Activated CD4-positive, alpha-beta T cell treated with anti-CD3 and anti-CD28 coated beads, Interleukin-2, amount 10 ng/mL, durations not matched to agents 24 days and 14 days (primary cell): ENCODE measurements at regions of chr2 and their contacts with region 1.

Region 1: DNA sequence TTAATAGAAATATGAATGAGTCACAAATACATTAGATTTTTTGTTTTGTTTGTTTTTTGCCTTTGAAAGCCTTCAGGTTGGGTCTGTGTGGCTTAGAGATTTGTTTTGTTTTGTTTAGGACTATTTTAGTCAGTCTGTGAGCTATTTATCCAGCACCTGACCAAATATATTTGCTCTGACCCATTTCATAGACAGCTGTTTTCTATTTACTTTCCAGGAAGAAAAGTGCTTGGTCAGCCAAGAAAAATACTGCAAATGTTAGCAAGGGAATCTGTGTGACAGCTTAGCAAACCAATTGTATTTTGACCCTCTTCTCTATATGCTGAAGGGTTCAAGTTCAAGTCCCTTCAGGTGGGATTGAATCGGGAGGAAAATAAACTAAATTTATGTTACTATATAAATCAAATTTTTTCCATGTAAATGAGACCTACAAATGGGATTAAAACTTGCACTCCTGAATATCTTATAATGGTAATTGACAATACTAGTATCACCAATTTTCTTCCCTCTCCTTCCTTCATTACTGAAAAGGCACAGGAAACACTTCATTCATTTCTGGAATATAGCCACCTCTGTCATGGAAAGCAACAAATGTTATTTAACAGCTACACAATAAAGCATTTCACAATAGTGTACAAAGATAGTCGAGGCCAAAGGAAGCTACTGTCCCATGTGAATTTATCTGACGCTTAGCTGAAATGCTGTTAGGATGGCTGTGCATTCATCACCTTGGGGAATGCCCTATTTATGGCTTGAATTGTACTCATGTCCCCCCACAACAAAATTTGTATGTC is 23.1 kb upstream of the KLF7 start:
- DNase-seq: no peak
- H3K4me3 Mint-ChIP-seq: no peak overlapping the region
- H3K27ac Mint-ChIP-seq: no peak overlapping the region
- H3K4me1 Mint-ChIP-seq: peaks cover 7% of the 10 kb centered on the region
- H3K27me3 Mint-ChIP-seq: peaks cover 12% of the 10 kb centered on the region

Region 2: DNA sequence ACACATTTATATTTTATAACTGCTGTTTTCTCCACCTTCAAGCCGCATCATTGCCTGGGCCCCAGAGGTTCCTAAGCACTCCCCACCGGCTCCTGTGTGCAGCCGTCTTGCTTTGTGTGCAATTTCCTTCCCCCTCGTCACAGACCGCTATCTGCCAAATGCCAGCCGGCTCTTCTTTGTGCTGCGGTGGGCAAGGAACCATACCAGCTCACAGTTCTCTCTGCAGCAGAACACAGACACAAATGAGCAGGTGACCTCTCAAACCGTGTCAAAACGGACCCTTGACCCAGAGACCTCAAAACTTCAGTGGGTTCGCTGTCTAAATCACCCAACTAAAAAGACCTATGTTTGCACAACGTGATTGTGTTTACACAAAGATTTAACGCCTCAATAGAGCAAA is 81.3 kb before region 1 on chr2:
- intact Hi-C with region 1: no loop called
- DNase-seq: no peak
- H3K4me3 Mint-ChIP-seq: no peak overlapping the region
- H3K27ac Mint-ChIP-seq: no peak overlapping the region
- H3K4me1 Mint-ChIP-seq: peaks cover 5% of the 10 kb centered on the region
- H3K27me3 Mint-ChIP-seq: no peaks in the 10 kb centered on the region

Region 3: GRCh38 chr2:207223051-207223450 is 34.2 kb after region 1 on chr2:
- intact Hi-C with region 1: loop called (anchors 5 kb)
- DNase-seq: peak; percentile 59
- H3K4me3 Mint-ChIP-seq: no peak overlapping the region
- H3K27ac Mint-ChIP-seq: peak overlapping the region; percentile 59
- H3K4me1 Mint-ChIP-seq: peaks cover 35% of the 10 kb centered on the region
- H3K27me3 Mint-ChIP-seq: peaks cover 6% of the 10 kb centered on the region

Region 4: DNA sequence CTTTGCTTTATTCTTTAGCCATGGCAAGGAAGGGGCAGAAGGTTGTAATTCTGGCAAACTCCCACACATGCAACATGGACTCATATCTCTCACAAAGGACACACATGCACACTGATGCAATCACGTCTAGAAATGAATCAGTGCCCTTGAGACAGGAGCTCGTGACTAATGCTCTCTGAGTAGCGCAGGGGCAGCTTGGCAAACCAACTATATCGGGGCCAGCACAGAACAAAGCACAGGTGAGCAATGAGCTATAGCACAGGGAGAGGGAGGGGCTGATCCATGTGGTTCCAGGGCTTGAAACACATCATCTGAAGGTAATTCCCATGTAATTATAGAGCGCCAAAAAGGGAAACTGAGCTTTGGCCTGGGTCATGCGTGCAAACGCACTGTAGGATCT is 142.1 kb after region 1 on chr2:
- intact Hi-C with region 1: no loop called
- DNase-seq: peak; percentile 83
- H3K4me3 Mint-ChIP-seq: peak overlapping the region; percentile 59
- H3K27ac Mint-ChIP-seq: peak overlapping the region; percentile 86
- H3K4me1 Mint-ChIP-seq: peaks cover 72% of the 10 kb centered on the region
- H3K27me3 Mint-ChIP-seq: no peaks in the 10 kb centered on the region